Sigmoid colon (tissue), 7 donors: ENCODE measurements at regions of chr10 and their contacts with region 1.

Region 1: DNA sequence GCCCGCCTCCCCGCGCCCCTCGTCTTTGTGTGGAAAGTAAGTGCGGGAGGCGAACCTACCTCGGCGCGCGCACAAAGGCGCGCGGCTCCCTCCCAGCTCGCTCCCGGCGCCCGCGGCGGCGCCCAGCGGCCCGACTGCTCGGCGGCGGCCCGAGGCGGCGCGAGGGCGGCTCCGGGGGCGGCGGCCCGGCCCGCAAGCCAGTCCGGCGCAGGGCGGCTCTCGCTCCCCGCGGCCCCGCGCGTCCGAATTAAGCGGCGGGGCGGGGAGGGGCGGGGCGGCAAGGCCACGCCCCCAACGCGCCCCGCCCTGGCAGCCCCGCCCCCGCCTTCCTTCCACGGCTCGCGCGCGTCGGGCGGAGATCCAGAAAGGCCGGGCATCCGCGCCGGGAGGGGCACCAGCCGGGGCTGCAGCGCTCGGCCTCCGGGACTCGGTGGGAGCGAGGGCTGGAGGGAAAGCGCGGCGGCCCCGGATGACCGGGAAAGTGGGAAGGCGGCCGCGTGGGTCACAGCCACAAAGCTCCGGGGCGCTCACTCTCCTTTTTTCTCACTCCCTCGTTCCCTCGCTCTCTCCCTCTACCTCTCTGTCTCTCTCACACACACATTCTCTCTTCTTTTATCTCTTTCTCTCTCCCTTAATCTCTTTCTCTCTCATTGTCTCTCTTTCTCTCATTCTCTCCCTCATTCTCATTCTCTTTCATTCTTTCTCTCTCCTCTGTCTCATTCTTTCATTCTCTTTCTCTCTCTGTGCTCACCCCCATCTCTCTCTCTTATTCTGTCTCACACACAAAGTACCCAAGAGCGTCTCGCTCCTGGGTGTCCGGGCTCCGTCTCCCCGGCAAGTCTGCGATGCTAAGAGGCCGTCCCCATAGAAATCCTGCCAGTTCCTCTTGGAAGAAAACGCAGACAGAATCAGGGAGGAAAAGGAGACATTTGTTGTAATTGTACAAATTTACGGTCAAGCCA is 170.2 kb downstream of the FAM107B start:
- DNase-seq: peak; percentile 90
- H3K4me3 ChIP-seq: peak overlapping the region; percentile 27 to 71 (median 62)
- H3K27ac ChIP-seq: peak overlapping the region; percentile 68 to 81 (median 77)
- H3K4me1 ChIP-seq: peaks cover 0 to 25% (median 12%) of the 10 kb centered on the region in 4 donors
- H3K27me3 ChIP-seq: no peaks in the 10 kb centered on the region
- CTCF ChIP-seq: no peak
- EP300 ChIP-seq: no peak
- POLR2A ChIP-seq: no peak

Region 2: DNA sequence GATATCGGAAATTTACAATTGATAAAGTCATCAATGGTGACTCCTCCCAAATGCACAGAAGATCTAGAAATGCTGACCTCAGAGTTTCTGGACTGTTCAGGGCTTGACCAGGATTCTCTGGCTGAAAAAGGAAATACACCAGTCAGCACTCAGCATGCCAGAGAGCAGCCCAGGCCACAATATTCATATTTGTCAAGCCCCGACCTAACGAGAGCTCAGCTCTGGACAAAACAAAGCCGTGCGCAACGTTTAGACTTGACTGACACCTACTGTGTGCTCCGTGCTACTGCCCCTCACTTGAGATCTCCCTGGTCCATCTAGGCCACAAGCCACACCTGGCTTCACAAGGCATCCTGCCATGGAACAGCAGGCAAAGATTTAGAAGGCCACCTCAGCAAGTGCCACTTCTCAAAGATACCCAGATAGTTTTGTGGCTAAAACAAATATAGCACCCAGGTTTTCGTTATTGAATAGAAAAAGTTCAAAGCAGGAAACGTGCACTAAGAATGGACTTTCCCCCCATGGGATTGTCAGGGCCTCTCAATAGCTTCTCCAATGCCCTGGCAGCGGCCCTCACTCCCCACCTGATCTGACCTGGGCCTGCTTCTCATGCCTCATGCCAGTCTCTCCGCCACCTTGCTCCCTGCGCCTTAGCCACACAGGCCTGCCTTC is 48.0 kb before region 1 on chr10:
- intact Hi-C with region 1: no loop called
- DNase-seq: no peak
- H3K4me3 ChIP-seq: no peak overlapping the region
- H3K27ac ChIP-seq: peak overlapping the region in 2 of 4 donors; percentile 5 to 20
- H3K4me1 ChIP-seq: peaks cover 0 to 15% (median 10%) of the 10 kb centered on the region in 4 donors
- H3K27me3 ChIP-seq: no peaks in the 10 kb centered on the region
- CTCF ChIP-seq: no peak
- EP300 ChIP-seq: no peak
- POLR2A ChIP-seq: no peak

Region 3: GRCh38 chr10:14698111-14698828 is 93.8 kb after region 1 on chr10:
- intact Hi-C with region 1: no loop called
- DNase-seq: no peak
- H3K4me3 ChIP-seq: no peak overlapping the region
- H3K27ac ChIP-seq: no peak overlapping the region
- H3K4me1 ChIP-seq: peaks cover 0 to 15% (median 6%) of the 10 kb centered on the region in 4 donors
- H3K27me3 ChIP-seq: no peaks in the 10 kb centered on the region
- CTCF ChIP-seq: no peak
- EP300 ChIP-seq: no peak
- POLR2A ChIP-seq: no peak

Region 4: DNA sequence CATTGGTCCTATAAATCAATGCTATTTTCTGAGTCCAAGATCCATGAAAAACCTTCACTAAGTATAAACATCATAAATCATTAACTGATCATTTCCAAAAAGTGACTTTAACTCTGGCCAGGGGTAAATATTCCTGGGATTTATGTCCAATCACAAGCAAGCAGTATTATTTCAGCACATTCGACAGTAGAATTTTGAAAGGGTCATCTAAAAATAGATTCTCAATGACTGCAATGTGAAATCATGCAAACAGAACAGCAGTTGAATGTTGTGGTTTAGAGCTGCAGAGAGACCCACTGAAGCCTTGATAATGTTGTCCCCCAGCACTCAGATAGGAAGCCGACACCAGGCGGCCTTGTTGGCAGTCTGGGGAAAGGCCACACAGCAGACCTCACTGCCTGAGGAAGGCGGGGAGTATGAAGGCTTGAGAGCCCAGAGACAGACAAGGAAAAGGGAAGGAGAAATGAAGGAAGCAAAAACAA is 132.2 kb after region 1 on chr10:
- intact Hi-C with region 1: loop called (anchors 10 kb)
- DNase-seq: peak; percentile 76
- H3K4me3 ChIP-seq: no peak overlapping the region
- H3K27ac ChIP-seq: peak overlapping the region; percentile 48 to 68 (median 56)
- H3K4me1 ChIP-seq: peaks cover 0 to 39% (median 27%) of the 10 kb centered on the region in 4 donors
- H3K27me3 ChIP-seq: no peaks in the 10 kb centered on the region
- CTCF ChIP-seq: no peak
- EP300 ChIP-seq: no peak
- POLR2A ChIP-seq: no peak

Region 5: DNA sequence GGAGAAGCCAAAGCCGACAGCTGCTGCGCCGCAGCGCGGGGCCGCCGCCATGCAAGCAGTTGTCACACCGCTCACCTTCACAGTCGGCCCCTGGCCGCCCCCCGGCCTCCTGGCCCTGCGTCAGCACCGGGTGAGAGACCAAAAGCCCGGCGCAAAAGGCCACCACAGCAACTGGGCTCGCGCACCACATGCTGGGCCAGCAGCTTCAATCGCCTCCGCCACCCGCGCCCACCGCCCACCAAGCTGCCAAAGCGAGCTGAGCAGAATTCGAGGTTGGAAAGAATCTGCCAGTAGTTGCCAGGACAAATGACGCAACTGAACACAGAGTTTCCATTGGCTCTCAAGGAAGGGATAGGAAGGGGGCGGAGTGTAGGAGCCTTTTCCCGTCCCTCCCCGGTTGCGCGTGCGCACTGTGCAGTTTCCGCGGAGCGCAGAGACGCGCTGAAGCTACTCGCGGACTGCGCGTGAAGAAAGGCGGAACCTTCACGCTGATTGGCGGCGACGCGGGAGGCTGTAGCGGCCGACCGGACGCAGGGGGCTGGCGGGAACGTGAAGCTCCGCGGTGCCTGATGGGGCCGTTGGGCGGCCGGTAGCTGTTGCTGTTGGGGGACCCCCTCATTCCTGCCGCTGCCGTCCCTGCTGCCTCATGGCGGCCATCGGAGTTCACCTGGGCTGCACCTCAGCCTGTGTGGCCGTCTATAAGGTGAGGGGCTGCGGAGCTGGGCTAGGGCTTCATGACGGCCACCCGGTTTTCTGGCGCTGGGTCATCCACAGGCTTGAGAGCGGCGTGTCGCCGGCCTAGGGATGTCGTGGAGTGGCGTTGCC is 233.5 kb after region 1 on chr10 and contains the starts of genes CDNF, HSPA14 and MSANTD7:
- intact Hi-C with region 1: loop called (anchors 1 kb)
- DNase-seq: peak; percentile 100
- H3K4me3 ChIP-seq: peak within 1 kb of the TSS; percentile 86 to 95 (median 90)
- H3K27ac ChIP-seq: peak within 1 kb of the TSS; percentile 90 to 96 (median 95)
- H3K4me1 ChIP-seq: peaks cover 0 to 27% (median 17%) of the 10 kb centered on the region in 4 donors
- H3K27me3 ChIP-seq: no peaks in the 10 kb centered on the region
- CTCF ChIP-seq: no peak
- EP300 ChIP-seq: peak in 1 of 4 donors; percentile 52
- POLR2A ChIP-seq: peak; percentile 58 to 75
- total RNA-seq, gene CDNF: 1.5 to 2.9 (median 2.2) TPM in 3 of 4 donors, not detected in the other
- total RNA-seq, gene HSPA14: 10.0 to 13.4 (median 11.6) TPM
- total RNA-seq, gene MSANTD7: 4.7 to 8.1 (median 5.8) TPM

Region 6: GRCh38 chr10:14852236-14852635 is 247.8 kb after region 1 on chr10:
- intact Hi-C with region 1: no loop called
- DNase-seq: no peak
- H3K4me3 ChIP-seq: no peak overlapping the region
- H3K27ac ChIP-seq: no peak overlapping the region
- H3K4me1 ChIP-seq: no peaks in the 10 kb centered on the region
- H3K27me3 ChIP-seq: no peaks in the 10 kb centered on the region
- CTCF ChIP-seq: no peak
- EP300 ChIP-seq: no peak
- POLR2A ChIP-seq: no peak

Region 7: DNA sequence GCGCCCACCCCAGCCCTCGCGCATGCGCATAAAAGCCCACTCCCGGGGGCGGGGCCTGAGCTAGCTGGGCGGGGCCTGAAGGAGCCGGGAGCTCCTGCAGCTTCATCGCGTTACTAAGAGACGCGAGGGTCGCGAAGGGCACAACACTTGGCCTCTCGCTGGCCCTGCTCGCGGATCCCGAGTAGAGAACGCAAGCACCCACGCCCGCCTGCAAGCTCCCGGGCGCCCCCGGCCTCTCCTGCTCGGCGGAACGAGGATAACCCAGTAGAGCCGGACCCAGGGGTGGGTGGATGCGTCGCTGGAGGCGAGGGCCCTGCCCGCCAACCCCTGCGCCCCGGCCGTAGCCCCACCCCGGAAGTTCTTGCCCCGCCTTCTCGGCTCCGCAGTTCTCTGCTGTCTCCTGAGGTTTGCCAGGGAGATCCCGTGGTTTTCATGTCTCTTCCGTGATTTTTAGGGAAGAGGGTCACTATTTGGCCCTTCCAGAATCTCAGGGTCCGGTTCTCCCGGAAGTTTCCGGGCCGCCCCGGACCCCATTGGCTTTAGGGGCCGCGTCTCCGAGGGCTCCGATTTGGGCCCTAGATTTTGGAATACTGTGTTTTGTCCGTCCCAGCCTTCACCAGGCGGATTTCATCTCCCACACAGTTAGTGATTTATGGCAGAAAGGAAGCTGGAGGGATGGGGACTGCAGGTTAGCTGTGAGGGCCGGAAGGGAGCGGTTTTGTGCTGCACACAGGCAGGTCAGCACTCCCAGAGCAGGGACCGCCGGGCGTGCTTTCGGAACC is 355.0 kb after region 1 on chr10 and contains the start of gene MEIG1:
- intact Hi-C with region 1: loop called (anchors 10 kb)
- DNase-seq: peak; percentile 97
- H3K4me3 ChIP-seq: peak within 1 kb of the TSS; percentile 62 to 71 (median 70)
- H3K27ac ChIP-seq: peak within 1 kb of the TSS; percentile 90 to 97 (median 95)
- H3K4me1 ChIP-seq: peaks cover 0 to 15% (median 8%) of the 10 kb centered on the region in 4 donors
- H3K27me3 ChIP-seq: no peaks in the 10 kb centered on the region
- CTCF ChIP-seq: no peak
- EP300 ChIP-seq: no peak
- POLR2A ChIP-seq: peak in 1 of 2 donors; percentile 39
- total RNA-seq, gene MEIG1: 1.3 TPM in 1 of 4 donors, not detected in the others

Region 8: DNA sequence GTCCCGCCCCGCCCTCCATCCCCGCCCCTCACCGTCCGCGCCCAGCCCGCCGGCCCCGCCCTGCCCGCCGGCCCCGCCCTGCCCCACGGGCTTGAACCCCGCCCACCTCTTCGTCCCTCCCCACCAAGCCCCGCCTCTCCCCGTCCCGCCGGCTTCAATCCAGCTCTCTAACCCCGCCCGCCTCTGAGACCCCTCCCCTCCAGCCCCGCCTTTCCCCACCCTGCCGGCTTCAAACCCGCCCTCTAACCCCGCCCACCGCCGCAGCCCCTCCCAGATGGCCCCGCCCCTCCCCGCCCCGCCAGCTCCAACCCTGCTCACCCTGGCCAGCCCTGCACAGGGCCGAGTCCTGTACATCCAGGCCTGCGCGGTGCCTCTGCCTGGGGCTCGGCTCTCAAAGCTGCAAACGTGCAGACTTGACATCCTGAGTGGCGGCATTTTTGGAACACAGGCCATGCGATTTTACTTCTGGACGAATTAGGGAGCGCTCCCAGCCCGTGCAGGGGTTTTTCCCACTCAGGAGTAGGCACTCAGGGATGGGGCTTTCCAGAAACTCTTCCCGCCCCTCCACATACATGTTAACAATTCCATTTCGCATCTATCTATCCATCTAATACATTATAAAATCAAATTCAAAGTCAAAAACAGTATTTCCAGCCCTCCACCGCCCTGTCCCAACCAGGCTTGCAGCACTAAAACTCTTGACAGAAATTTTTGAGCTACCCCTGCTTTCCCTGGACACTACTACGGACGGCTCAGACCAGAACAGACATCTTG is 564.5 kb after region 1 on chr10:
- intact Hi-C with region 1: loop called (anchors 5 kb)
- DNase-seq: peak; percentile 99
- H3K4me3 ChIP-seq: peak overlapping the region in 2 of 4 donors; percentile 21 to 98
- H3K27ac ChIP-seq: peak overlapping the region; percentile 56 to 72 (median 68)
- H3K4me1 ChIP-seq: peaks cover 0 to 22% (median 13%) of the 10 kb centered on the region in 4 donors
- H3K27me3 ChIP-seq: no peaks in the 10 kb centered on the region
- CTCF ChIP-seq: no peak
- EP300 ChIP-seq: no peak
- POLR2A ChIP-seq: no peak